OCI-LY7 (cell line): ENCODE measurements at regions of chr11 and their contacts with region 1.

Region 1: DNA sequence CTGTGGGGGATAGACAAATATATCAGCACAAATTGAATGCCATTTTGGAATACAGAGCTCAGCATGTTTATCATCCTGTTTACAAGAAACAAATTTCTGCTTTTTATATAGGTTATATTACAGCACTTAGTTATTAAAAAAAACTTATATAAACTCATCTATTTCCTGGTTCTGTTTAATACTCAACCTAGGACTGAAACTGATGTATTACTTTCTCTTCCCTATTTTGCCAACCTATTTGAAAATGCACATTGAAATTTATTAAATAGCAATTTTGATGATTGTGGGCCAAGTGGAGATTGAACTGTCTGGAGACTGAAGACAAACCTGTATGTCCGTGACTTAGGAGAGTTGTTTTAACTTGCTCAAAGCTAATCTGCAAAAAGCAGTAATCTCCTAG is 288.3 kb upstream of the ANO3 start:
- DNase-seq: peak; percentile 5
- H3K4me3 ChIP-seq: no peak overlapping the region
- H3K27ac ChIP-seq: no peak overlapping the region
- H3K4me1 ChIP-seq: peaks cover 10% of the 10 kb centered on the region
- CTCF ChIP-seq: no peak

Region 2: GRCh38 chr11:25625094-25625493 is 418.6 kb before region 1 on chr11:
- CTCF ChIA-PET with region 1: no interaction called
- POLR2A ChIA-PET with region 1: no interaction called
- intact Hi-C with region 1: no loop called
- DNase-seq: no peak
- H3K4me3 ChIP-seq: no peak overlapping the region
- H3K27ac ChIP-seq: no peak overlapping the region
- H3K4me1 ChIP-seq: no peaks in the 10 kb centered on the region
- CTCF ChIP-seq: no peak

Region 3: GRCh38 chr11:25655636-25656035 is 388.0 kb before region 1 on chr11:
- CTCF ChIA-PET with region 1: no interaction called
- POLR2A ChIA-PET with region 1: no interaction called
- intact Hi-C with region 1: no loop called
- DNase-seq: no peak
- H3K4me3 ChIP-seq: no peak overlapping the region
- H3K27ac ChIP-seq: no peak overlapping the region
- H3K4me1 ChIP-seq: no peaks in the 10 kb centered on the region
- CTCF ChIP-seq: no peak

Region 4: DNA sequence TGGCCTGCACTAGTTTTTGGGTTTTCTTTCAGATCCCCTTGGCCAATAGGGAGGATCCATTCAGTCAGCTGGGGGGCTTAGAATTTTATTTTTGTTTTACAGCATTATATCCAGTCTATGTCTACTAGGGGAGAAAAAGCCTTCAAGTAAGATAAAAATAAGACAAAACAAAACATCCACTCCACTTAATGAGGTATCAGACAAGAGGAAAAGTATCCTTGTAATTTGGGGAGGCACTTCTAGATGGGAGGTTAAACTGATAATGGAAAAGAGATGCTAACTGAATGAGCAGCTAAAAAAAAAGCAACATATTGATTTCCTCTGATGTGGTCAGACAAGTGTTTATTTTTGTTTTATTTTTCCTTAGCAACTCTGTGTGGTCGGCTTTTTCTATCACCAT is 10.3 kb after region 1 on chr11:
- CTCF ChIA-PET with region 1: no interaction called
- POLR2A ChIA-PET with region 1: interaction called, 19 read pairs
- intact Hi-C with region 1: no loop called
- DNase-seq: no peak
- H3K4me3 ChIP-seq: no peak overlapping the region
- H3K27ac ChIP-seq: no peak overlapping the region
- H3K4me1 ChIP-seq: no peaks in the 10 kb centered on the region
- CTCF ChIP-seq: no peak

Region 5: GRCh38 chr11:26187639-26188038 is 144.0 kb after region 1 on chr11:
- CTCF ChIA-PET with region 1: no interaction called
- POLR2A ChIA-PET with region 1: no interaction called
- intact Hi-C with region 1: no loop called
- DNase-seq: no peak
- H3K4me3 ChIP-seq: no peak overlapping the region
- H3K27ac ChIP-seq: no peak overlapping the region
- H3K4me1 ChIP-seq: peaks cover 8% of the 10 kb centered on the region
- CTCF ChIP-seq: no peak